ENCODE measurements at regions of chr15 and their contacts with region 1.

Region 1: GRCh38 chr15:81155375-81156218 is 21.5 kb downstream of the CFAP161 start:
- DNase-seq: peak; percentile 18
- ATAC-seq: peak; percentile 33
- H3K4me3 Mint-ChIP-seq: no peak overlapping the region
- H3K27ac Mint-ChIP-seq: no peak overlapping the region
- H3K4me1 Mint-ChIP-seq: peaks cover 3% of the 10 kb centered on the region
- H3K27me3 Mint-ChIP-seq: peaks cover 7% of the 10 kb centered on the region

Region 2: GRCh38 chr15:81083201-81083600 is 72.4 kb before region 1 on chr15:
- CTCF ChIA-PET with region 1: no interaction called
- POLR2A ChIA-PET with region 1: no interaction called
- intact Hi-C with region 1: loop called in 1 of 2 experiments (anchors 2 kb)
- DNase-seq: no peak
- ATAC-seq: no peak
- H3K4me3 Mint-ChIP-seq: no peak overlapping the region
- H3K27ac Mint-ChIP-seq: no peak overlapping the region
- H3K4me1 Mint-ChIP-seq: peaks cover 6% of the 10 kb centered on the region
- H3K27me3 Mint-ChIP-seq: no peaks in the 10 kb centered on the region

Region 3: DNA sequence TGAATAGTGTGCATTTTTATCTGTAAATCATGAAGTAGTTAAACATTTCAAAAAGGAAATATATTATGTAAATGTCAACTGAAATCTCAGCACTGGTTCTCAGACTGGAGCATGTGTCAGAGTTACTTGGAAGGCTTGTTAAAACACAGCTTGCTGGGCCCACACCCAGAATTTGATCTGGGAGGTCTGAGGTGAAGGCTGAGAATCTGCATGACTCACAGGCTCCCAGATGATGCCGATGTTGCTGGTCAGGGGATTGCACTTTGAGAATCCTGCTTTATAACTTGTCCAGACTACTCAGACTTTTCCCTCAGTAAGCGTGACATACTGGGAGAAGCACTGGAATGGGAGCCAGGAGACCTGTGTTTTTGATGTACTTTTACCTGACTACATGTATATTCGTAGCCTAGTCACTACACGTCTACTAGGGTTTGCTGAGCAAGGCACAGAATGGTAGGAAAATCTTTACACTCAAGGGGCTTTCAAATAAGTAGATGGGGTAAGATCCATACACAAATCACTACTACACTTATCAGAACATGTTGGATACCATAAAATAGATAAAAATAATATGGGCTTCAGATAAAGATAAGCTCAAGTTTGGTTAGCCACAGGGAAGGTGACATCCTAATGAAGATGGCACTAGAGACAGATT is 967.3 kb after region 1 on chr15:
- CTCF ChIA-PET with region 1: no interaction called
- POLR2A ChIA-PET with region 1: no interaction called
- intact Hi-C with region 1: loop called in 1 of 2 experiments (anchors 10 kb)
- DNase-seq: no peak
- ATAC-seq: no peak
- H3K4me3 Mint-ChIP-seq: no peak overlapping the region
- H3K27ac Mint-ChIP-seq: no peak overlapping the region
- H3K4me1 Mint-ChIP-seq: no peaks in the 10 kb centered on the region
- H3K27me3 Mint-ChIP-seq: no peaks in the 10 kb centered on the region

Measured in activated CD4-positive, alpha-beta T cell treated with anti-CD3 and anti-CD28 coated beads for 36 hours (primary cell).